Naive thymus-derived CD4-positive, alpha-beta T cell (primary cell): ENCODE measurements at regions of chr2 and their contacts with region 1.

Region 1: DNA sequence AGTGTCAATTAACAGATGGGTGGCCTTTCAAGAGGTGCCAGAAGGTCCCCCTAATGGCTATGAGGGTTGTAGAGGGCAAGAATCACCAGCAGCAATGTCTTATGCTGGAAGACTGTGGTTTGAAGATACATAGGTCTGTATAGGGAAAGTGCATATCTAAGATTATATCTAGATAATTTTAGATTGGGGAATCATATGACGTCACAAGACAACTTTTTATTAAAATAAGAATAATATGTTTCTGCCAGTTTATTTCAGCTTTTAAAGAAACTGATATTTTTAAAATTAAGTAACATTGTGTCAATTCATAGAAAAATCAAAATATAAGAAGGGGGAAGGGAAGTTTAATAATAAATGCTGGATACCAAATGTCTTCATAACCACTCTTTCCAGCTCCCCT is 162.3 kb downstream of the TTN start:
- DNase-seq: no peak
- ATAC-seq: no peak
- H3K4me3 ChIP-seq: no peak overlapping the region
- H3K4me3 Mint-ChIP-seq: no peak overlapping the region
- H3K27ac ChIP-seq: no peak overlapping the region
- H3K27ac Mint-ChIP-seq: no peak overlapping the region
- H3K4me1 ChIP-seq: no peaks in the 10 kb centered on the region
- H3K4me1 Mint-ChIP-seq: no peaks in the 10 kb centered on the region
- H3K27me3 ChIP-seq: no peaks in the 10 kb centered on the region
- H3K27me3 Mint-ChIP-seq: no peaks in the 10 kb centered on the region

Region 2: DNA sequence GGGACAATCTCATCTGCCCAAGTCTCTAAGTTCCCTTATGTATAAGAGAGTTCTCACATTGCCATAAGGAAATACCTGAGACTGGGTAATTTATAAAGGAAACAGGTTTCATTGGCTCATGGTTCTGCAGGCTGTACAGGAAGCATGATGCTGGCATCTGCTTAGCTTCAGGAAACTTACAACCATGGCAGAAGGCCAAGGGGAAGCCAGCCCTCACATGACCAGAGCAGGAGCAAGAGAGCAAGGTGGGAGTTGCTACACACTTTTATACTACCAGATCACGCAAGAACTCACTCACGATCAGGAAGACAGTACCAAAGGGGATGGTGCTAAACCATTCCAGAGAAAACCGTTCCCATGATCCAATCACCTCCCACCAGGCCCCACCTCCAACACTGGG is 267.9 kb before region 1 on chr2:
- CTCF ChIA-PET with region 1: no interaction called
- POLR2A ChIA-PET with region 1: no interaction called
- intact Hi-C with region 1: no loop called
- DNase-seq: no peak
- ATAC-seq: no peak
- H3K4me3 ChIP-seq: no peak overlapping the region
- H3K4me3 Mint-ChIP-seq: no peak overlapping the region
- H3K27ac ChIP-seq: no peak overlapping the region
- H3K27ac Mint-ChIP-seq: no peak overlapping the region
- H3K4me1 ChIP-seq: no peaks in the 10 kb centered on the region
- H3K4me1 Mint-ChIP-seq: peaks cover 0 to 5% (median 0%) of the 10 kb centered on the region in 7 donors
- H3K27me3 ChIP-seq: peaks cover 0 to 6% of the 10 kb centered on the region in 2 donors
- H3K27me3 Mint-ChIP-seq: peaks cover 27 to 38% (median 30%) of the 10 kb centered on the region in 5 donors

Region 3: GRCh38 chr2:178666458-178666857 is 21.5 kb after region 1 on chr2:
- CTCF ChIA-PET with region 1: interaction called, 3 read pairs
- POLR2A ChIA-PET with region 1: no interaction called
- intact Hi-C with region 1: loop called in 1 of 2 experiments (anchors 2 kb)
- DNase-seq: no peak
- ATAC-seq: no peak
- H3K4me3 ChIP-seq: no peak overlapping the region
- H3K4me3 Mint-ChIP-seq: no peak overlapping the region
- H3K27ac ChIP-seq: no peak overlapping the region
- H3K27ac Mint-ChIP-seq: no peak overlapping the region
- H3K4me1 ChIP-seq: no peaks in the 10 kb centered on the region
- H3K4me1 Mint-ChIP-seq: no peaks in the 10 kb centered on the region
- H3K27me3 ChIP-seq: no peaks in the 10 kb centered on the region
- H3K27me3 Mint-ChIP-seq: no peaks in the 10 kb centered on the region